ENCODE measurements at regions of chr11 and their contacts with region 1.

Region 1: GRCh38 chr11:2314525-2315394 is 12.9 kb downstream of the TSPAN32 start:
- DNase-seq: no peak
- ATAC-seq: peak; percentile 59
- H3K4me3 ChIP-seq: no peak overlapping the region
- H3K27ac ChIP-seq: peak overlapping the region; percentile 41; the same call in 1 of the 2 replicates
- H3K4me1 ChIP-seq: peaks cover 18% of the 10 kb centered on the region
- H3K27me3 ChIP-seq: no peaks in the 10 kb centered on the region
- CTCF ChIP-seq: no peak

Region 2: DNA sequence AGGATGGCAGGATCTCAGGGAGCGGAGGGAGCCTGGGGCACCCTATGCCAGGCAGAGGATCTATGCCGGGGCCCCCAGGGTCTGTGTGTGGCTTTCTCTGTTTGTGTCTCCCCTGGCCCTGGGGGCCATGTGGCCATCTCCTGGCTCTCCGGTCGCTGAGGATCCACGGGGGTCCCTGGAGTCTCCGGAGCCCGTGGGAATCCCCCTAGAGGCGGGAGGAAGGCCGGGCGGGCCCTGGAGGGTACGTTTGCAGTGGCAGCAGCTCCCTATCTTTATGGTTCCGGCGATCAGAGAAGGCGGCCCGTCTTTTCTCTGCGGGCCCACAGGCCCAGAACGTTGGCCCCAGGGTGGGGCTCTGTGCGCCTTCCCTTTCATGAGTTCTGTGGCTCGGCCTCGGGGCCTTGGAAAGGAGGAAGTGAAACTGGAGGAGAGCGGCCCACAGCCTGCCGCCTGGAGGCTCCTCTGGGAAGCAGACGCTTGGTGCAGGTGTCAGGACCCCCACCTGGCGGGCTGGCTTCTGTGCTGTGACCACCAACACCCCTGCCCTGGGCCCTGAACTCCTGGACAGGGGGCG is 212.1 kb after region 1 on chr11:
- CTCF ChIA-PET with region 1: interaction called, 5 read pairs
- POLR2A ChIA-PET with region 1: no interaction called
- in situ Hi-C with region 1: no loop called
- intact Hi-C with region 1: loop called (anchors 10 kb)
- DNase-seq: no peak
- ATAC-seq: 0 out of 2 replicates have a peak, but pooled peaks have one; percentile 23
- H3K4me3 ChIP-seq: peak overlapping the region in 1 of 2 experiments; percentile 29; a peak in 2 of 4 replicates
- H3K27ac ChIP-seq: no peak overlapping the region
- H3K4me1 ChIP-seq: no peaks in the 10 kb centered on the region
- H3K27me3 ChIP-seq: no peaks in the 10 kb centered on the region
- CTCF ChIP-seq: no peak

Region 3: GRCh38 chr11:2725368-2726300 is 410.9 kb after region 1 on chr11:
- CTCF ChIA-PET with region 1: no interaction called
- POLR2A ChIA-PET with region 1: no interaction called
- in situ Hi-C with region 1: no loop called
- intact Hi-C with region 1: no loop called
- DNase-seq: no peak
- ATAC-seq: no peak
- H3K4me3 ChIP-seq: no peak overlapping the region
- H3K27ac ChIP-seq: no peak overlapping the region
- H3K4me1 ChIP-seq: peaks cover 3% of the 10 kb centered on the region; the same call in 1 of the 2 replicates
- H3K27me3 ChIP-seq: no peaks in the 10 kb centered on the region
- CTCF ChIP-seq: no peak

Measured in Panc1 (cell line).